Heart right ventricle (tissue), 16 donors: ENCODE measurements at regions of chr5 and their contacts with region 1.

Region 1: DNA sequence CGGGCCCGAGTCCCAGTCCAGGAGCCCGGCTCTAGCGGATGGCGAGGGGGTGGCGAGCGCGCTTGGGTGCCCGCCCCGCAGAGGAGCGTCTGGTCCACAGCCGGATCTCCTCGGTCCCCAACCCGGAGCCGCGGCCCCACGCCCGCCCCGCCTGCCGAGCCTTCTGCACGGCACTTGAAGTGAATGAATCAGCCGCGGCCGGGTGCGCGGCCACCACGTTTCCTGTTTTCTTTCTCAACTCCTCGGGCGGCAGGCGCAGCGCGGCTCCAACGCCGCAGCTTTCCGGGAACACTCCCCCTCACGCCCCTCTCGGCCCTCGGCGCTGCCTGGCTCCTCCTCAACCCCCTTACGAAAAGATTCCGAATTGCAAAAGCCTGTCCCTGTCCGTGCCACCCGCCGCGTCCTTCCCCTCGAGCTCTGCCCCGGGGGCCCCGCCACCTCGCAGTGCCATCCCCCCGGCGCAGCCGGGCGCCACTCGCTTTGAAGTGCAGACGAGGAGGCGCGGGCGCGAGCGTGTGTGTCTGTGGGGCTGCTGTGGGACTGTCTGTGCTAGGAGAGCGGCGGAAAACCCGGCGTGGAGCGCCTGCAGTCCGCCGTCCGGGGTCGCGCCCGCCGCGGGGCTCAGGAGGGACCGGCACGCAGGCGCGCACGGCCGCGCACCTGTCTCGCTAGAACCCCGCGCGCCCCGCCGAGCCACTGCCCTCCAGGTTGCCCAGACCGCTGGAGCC is 456.6 kb downstream of the RAB3C start:
- DNase-seq: peak; percentile 71 to 85
- ATAC-seq: peak; percentile 66 to 87 (median 74)
- H3K4me3 ChIP-seq: peak overlapping the region; percentile 51 to 87 (median 78)
- H3K27ac ChIP-seq: peak overlapping the region; percentile 20 to 95 (median 78)
- H3K4me1 ChIP-seq: peaks cover 3 to 72% (median 55%) of the 10 kb centered on the region in 9 donors
- H3K27me3 ChIP-seq: no peaks in the 10 kb centered on the region
- CTCF ChIP-seq: no peak

Region 2: DNA sequence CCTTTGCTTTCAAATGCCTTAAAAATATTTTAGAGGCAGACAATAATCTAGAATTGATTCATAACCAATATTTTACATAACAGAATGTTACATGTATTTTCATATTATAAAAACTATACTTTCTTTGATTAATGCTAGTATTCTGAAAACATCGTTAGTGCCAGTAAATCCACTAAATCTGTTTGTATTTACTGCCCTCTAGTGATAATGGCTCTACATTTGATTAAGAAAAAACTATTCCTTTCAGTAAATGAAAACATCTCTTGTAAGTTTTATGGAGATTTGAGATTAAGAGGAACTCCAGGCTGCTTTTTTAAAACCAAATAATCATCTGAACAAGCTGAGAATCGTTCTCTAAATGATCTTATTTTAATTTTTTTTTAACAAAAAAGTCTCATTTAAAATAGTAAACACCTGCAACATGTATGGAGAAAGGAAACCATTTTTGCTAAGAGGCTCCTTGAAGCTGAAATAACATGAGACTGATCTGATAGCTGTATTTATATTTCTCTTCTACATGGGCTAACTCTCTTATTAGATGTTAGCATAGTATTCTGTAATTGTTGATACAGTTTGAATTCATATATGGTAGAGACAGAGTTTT is 31.9 kb before region 1 on chr5:
- intact Hi-C with region 1: no loop called
- DNase-seq: no peak
- ATAC-seq: no peak
- H3K4me3 ChIP-seq: no peak overlapping the region
- H3K27ac ChIP-seq: no peak overlapping the region
- H3K4me1 ChIP-seq: peaks cover 0 to 10% (median 4%) of the 10 kb centered on the region in 9 donors
- H3K27me3 ChIP-seq: no peaks in the 10 kb centered on the region
- CTCF ChIP-seq: peak in 8 of 9 donors; percentile 26 to 70 (median 58)

Region 3: DNA sequence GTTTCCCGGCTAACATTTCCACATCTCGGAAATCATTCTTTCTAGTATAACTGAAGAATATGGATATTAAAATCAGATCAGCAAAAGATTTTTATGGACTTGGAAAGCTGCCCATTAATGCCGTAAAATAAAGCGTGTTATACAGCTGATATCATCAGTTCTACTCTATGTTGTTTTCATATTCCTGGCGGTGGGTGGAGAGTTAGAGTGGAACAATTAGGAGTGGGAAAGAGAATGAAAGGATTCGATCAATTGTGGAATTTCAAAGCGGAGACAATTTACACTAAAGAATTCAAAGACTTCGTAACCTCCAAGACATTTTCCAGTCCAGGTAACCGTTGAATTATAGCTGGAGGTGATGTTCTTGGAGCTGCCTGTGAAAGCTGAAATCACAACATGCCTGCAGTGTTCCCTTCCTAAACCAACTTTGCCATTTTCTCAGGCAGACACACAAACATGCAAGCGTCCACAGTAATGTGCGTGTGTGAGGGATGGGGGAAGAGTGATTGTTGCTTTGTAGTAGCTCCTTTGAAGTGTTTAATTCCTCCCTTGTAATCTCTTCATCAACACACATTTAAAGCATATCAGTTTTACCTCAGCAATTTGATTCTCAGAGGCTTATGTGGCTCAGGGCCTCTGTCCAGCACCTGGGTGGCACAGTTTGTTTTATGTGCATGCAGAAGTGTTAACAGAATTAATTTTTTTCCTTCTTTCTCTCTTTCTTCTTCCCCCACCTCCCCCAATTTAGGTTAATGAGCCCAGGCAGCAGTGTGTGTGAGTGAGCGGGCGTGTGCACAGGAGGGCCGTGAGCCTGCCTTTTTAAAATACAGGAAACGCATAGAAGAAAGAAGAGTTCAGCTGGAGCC is 87.5 kb after region 1 on chr5:
- intact Hi-C with region 1: loop called in 7 of 10 experiments (anchors 1 to 10 kb)
- DNase-seq: no peak
- ATAC-seq: peak in 5 of 8 donors; percentile 2 to 13 (median 4)
- H3K4me3 ChIP-seq: peak overlapping the region in 9 of 10 donors; percentile 9 to 51 (median 42)
- H3K27ac ChIP-seq: peak overlapping the region; percentile 36 to 89 (median 84)
- H3K4me1 ChIP-seq: peaks cover 0 to 55% (median 36%) of the 10 kb centered on the region in 9 donors
- H3K27me3 ChIP-seq: no peaks in the 10 kb centered on the region
- CTCF ChIP-seq: no peak

Region 4: GRCh38 chr5:59158165-59158564 is 118.7 kb after region 1 on chr5:
- intact Hi-C with region 1: loop called in 1 of 10 experiments (anchors 5 kb)
- DNase-seq: peak in 1 of 2 donors; percentile 42
- ATAC-seq: peak; percentile 85 to 99 (median 94)
- H3K4me3 ChIP-seq: no peak overlapping the region
- H3K27ac ChIP-seq: peak overlapping the region; percentile 43 to 84 (median 77)
- H3K4me1 ChIP-seq: peaks cover 0 to 30% (median 14%) of the 10 kb centered on the region in 9 donors
- H3K27me3 ChIP-seq: no peaks in the 10 kb centered on the region
- CTCF ChIP-seq: no peak

Region 5: GRCh38 chr5:59169081-59169784 is 129.8 kb after region 1 on chr5:
- intact Hi-C with region 1: loop called in 8 of 10 experiments (anchors 2 to 10 kb)
- DNase-seq: no peak
- ATAC-seq: peak in 1 of 8 donors; percentile 39
- H3K4me3 ChIP-seq: no peak overlapping the region
- H3K27ac ChIP-seq: no peak overlapping the region
- H3K4me1 ChIP-seq: peaks cover 0 to 19% (median 0%) of the 10 kb centered on the region in 9 donors
- H3K27me3 ChIP-seq: no peaks in the 10 kb centered on the region
- CTCF ChIP-seq: no peak

Region 6: GRCh38 chr5:59174248-59174844 is 134.9 kb after region 1 on chr5:
- intact Hi-C with region 1: loop called in 8 of 10 experiments (anchors 2 to 10 kb)
- DNase-seq: peak in 1 of 2 donors; percentile 32
- ATAC-seq: peak; percentile 63 to 86 (median 78)
- H3K4me3 ChIP-seq: no peak overlapping the region
- H3K27ac ChIP-seq: no peak overlapping the region
- H3K4me1 ChIP-seq: peaks cover 0 to 17% (median 0%) of the 10 kb centered on the region in 9 donors
- H3K27me3 ChIP-seq: no peaks in the 10 kb centered on the region
- CTCF ChIP-seq: peak; percentile 62 to 90 (median 85)

Region 7: GRCh38 chr5:59351076-59351794 is 311.8 kb after region 1 on chr5:
- intact Hi-C with region 1: loop called in 1 of 10 experiments (anchors 10 kb)
- DNase-seq: peak in 1 of 2 donors; percentile 48
- ATAC-seq: peak; percentile 84 to 96 (median 95)
- H3K4me3 ChIP-seq: peak overlapping the region in 1 of 10 donors; percentile 15
- H3K27ac ChIP-seq: peak overlapping the region in 5 of 10 donors; percentile 35 to 64 (median 57)
- H3K4me1 ChIP-seq: peaks cover 0 to 35% (median 23%) of the 10 kb centered on the region in 9 donors
- H3K27me3 ChIP-seq: no peaks in the 10 kb centered on the region
- CTCF ChIP-seq: peak in 7 of 9 donors; percentile 5 to 65 (median 45)